IMR-90 (cell line): ENCODE measurements at regions of chr12 and their contacts with region 1.

Region 1: GRCh38 chr12:59677857-59678256 is 82.0 kb downstream of the SLC16A7 start:
- DNase-seq: no peak
- ATAC-seq: no peak
- H3K4me3 ChIP-seq: no peak overlapping the region
- H3K27ac ChIP-seq: no peak overlapping the region
- H3K4me1 ChIP-seq: no peaks in the 10 kb centered on the region
- H3K27me3 ChIP-seq: no peaks in the 10 kb centered on the region
- CTCF ChIP-seq: no peak
- POLR2A ChIP-seq: no peak
- RAD21 ChIP-seq: no peak

Region 2: GRCh38 chr12:59660148-59660547 is 17.7 kb before region 1 on chr12:
- CTCF ChIA-PET with region 1: no interaction called
- POLR2A ChIA-PET with region 1: no interaction called
- dilution Hi-C with region 1: no loop called
- in situ Hi-C with region 1: no loop called
- intact Hi-C with region 1: loop called (anchors 2 kb)
- DNase-seq: no peak
- ATAC-seq: no peak
- H3K4me3 ChIP-seq: no peak overlapping the region
- H3K27ac ChIP-seq: no peak overlapping the region
- H3K4me1 ChIP-seq: peaks cover 2% of the 10 kb centered on the region; the same call in 1 of the 2 replicates
- H3K27me3 ChIP-seq: no peaks in the 10 kb centered on the region
- CTCF ChIP-seq: no peak
- POLR2A ChIP-seq: no peak
- RAD21 ChIP-seq: no peak

Region 3: GRCh38 chr12:59895166-59895775 is 217.4 kb after region 1 on chr12:
- CTCF ChIA-PET with region 1: no interaction called
- POLR2A ChIA-PET with region 1: no interaction called
- dilution Hi-C with region 1: no loop called
- in situ Hi-C with region 1: no loop called
- intact Hi-C with region 1: no loop called
- DNase-seq: no peak
- ATAC-seq: no peak
- H3K4me3 ChIP-seq: no peak overlapping the region
- H3K27ac ChIP-seq: no peak overlapping the region
- H3K4me1 ChIP-seq: no peaks in the 10 kb centered on the region
- H3K27me3 ChIP-seq: no peaks in the 10 kb centered on the region
- CTCF ChIP-seq: no peak
- POLR2A ChIP-seq: no peak
- RAD21 ChIP-seq: no peak